Calu3 (cell line): ENCODE measurements at regions of chr5 and their contacts with region 1.

Region 1: DNA sequence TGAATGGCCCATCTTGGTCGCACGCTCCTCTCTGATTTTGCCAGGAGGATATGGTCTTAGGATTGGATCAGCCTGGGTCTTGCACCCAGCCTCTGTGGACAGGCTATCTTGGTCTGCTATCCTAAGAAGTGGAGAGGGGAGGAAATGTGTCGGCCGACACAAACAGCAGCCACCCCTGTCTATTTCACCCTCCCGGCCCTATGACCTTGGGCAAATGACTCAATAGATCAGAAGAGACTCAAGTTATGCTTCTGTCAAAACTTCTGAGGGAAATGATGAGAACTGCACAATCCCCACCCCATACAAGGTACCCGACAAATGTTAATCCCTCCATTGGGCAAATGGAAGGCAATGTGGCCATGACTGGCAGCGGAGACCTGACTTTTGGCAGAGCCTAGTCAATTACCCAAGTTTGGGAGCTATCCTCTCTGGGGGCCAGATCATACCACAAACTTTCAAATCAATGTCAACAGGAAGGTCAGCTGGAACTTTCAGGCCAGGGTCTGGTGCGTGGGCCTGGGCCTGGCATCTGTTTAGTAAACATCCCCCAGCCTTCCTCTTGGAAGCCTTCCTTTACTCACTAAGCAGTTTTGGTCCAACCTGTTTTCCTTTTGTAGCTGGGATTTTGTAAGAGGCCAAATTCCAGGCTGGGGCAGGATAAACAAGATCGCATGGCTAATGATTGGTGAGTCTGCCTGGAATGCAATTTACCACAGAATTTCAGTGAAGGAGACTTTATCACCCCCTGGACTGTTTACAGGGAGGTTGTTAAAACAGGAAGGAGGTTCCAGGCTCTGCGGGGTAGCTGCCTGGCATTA is 64.2 kb upstream of the CPEB4 start:
- DNase-seq: peak; percentile 86
- H3K4me3 Mint-ChIP-seq: peak overlapping the region; percentile 28
- H3K27ac Mint-ChIP-seq: peak overlapping the region; percentile 60
- H3K4me1 Mint-ChIP-seq: peaks cover 51% of the 10 kb centered on the region
- H3K27me3 Mint-ChIP-seq: no peaks in the 10 kb centered on the region
- CTCF ChIP-seq: no peak

Region 2: DNA sequence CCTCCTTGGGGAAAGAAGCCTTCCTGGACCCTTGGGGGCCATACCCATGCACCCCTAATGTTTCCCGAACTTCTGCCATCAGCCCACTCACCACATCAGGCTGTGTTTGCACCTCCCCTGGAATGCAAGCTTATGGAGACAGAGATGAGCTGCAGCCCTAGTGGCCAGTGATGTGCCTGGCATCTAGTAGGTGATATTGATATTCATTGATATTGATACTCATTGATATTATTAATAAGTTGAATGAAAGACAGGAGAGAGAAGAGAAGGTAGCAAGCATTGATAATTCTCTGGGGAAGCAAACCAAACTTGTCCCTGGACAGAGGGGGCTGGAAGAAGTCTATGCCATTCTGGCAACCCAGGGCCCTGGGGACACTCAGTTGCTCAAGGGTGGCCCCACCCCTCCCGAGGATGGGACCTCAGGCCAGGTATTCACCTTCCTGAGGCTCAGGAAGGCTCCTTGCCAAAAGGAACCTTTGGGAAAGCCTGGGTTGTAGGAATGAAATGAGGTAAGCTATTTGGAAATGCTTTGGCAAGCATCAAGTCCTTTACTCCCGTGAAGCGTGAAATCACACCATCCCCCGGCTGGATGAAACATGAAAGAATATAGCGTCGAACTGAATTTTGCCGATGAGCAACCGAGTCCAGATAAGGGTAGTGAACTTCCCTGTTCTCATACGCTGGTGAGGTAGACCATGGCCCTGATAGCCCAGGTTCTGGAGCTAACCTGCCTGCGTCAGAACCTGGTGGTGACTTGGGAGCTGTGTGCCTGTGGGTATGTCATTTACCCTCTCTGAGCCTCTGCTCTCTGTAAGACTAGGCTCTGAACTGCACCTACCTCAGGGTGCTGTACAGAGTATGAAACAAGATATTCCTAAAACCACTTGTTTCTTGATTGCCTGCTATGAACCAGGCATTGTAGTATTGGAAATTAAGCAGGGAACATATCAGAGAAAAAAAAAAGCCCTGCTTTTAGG is 102.4 kb before region 1 on chr5:
- CTCF ChIA-PET with region 1: no interaction called
- intact Hi-C with region 1: no loop called
- DNase-seq: no peak
- H3K4me3 Mint-ChIP-seq: no peak overlapping the region
- H3K27ac Mint-ChIP-seq: no peak overlapping the region
- H3K4me1 Mint-ChIP-seq: peaks cover 14% of the 10 kb centered on the region
- H3K27me3 Mint-ChIP-seq: no peaks in the 10 kb centered on the region
- CTCF ChIP-seq: no peak

Region 3: DNA sequence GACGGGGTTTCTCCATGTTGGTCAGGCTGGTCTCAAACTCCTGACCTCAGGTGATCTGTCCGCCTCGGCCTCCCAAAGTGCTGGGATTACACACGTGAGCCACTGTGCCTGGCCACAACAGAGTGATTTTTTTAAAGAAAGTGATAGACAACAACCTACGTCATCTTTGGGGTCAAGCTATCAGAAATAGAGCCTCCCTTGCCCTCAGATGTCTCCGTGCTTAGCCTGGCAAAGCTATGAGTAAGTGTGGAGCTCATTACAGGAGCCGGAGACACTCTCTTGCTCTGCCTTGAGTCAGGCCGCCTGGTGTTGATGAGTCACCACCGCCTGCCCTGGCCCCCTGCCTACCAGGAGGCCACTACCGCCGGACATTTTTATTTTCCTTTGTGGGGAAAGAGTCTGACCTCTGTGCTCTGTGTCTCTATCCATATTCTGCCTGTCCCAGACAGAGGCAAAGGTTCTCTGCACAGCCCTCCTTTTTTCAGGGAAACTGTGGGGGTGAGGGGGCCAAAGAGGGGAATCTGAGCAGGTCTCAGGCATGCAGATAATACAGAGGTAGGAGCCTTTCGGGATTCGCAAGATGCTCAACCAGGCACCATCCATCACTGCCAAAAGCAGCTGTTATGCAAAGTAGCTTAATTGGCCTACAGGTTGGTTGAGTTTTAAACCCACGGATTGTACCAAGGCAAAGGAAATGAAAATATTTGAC is 59.4 kb before region 1 on chr5:
- CTCF ChIA-PET with region 1: interaction called, 4 read pairs
- intact Hi-C with region 1: loop called (anchors 1 kb)
- DNase-seq: peak; percentile 92
- H3K4me3 Mint-ChIP-seq: peak overlapping the region; percentile 27
- H3K27ac Mint-ChIP-seq: peak overlapping the region; percentile 96
- H3K4me1 Mint-ChIP-seq: peaks cover 51% of the 10 kb centered on the region
- H3K27me3 Mint-ChIP-seq: no peaks in the 10 kb centered on the region
- CTCF ChIP-seq: no peak

Region 4: GRCh38 chr5:173780235-173781109 is 43.4 kb before region 1 on chr5:
- CTCF ChIA-PET with region 1: no interaction called
- intact Hi-C with region 1: no loop called
- DNase-seq: no peak
- H3K4me3 Mint-ChIP-seq: no peak overlapping the region
- H3K27ac Mint-ChIP-seq: no peak overlapping the region
- H3K4me1 Mint-ChIP-seq: peaks cover 52% of the 10 kb centered on the region
- H3K27me3 Mint-ChIP-seq: no peaks in the 10 kb centered on the region
- CTCF ChIP-seq: no peak

Region 5: DNA sequence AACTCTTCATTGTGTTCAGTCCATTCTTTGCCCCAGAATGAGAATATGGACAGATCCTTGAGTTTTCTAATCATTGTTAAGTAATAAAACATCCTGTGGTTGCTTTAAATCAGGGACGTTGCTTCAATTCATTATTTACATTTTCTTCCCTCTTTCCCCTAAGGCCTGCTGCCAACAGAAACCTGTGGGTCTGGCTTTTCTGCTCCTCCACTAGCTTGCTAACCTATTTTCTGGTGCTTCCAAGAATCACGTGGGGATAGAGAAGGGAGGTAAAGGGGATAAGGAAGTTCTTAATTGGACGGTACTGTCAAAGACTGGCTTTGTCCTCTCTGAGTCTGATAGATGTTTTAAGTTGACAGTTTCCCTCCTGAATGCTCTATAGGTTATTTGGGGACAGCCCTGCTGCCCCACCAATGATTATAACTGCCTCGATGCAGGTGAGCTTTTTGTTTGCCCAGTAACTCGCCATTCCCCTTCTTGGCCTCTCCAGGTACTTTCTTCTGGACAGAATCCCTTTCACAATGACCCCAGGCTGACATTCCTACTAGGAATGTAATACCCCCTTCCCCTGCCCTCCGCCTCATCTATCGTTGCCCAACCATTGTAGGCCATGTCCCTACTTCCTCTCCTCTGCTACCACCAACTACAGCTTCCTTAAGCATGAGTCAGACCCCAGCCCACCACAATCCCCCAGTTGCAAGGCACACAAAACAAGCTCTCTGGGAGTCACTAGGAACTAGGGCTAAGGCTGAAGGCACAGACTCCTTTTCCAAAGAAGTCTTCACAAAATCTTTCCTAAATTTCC is 44.4 kb after region 1 on chr5:
- CTCF ChIA-PET with region 1: interaction called, 5 read pairs
- intact Hi-C with region 1: loop called (anchors 1 kb)
- DNase-seq: peak; percentile 73
- H3K4me3 Mint-ChIP-seq: peak overlapping the region; percentile 5
- H3K27ac Mint-ChIP-seq: peak overlapping the region; percentile 42
- H3K4me1 Mint-ChIP-seq: peaks cover 24% of the 10 kb centered on the region
- H3K27me3 Mint-ChIP-seq: no peaks in the 10 kb centered on the region
- CTCF ChIP-seq: no peak

Region 6: GRCh38 chr5:173887610-173888472 is 63.9 kb after region 1 on chr5 and contains the start of gene CPEB4:
- CTCF ChIA-PET with region 1: interaction called, 9 read pairs
- intact Hi-C with region 1: loop called (anchors 5 kb)
- DNase-seq: peak; percentile 99
- H3K4me3 Mint-ChIP-seq: peak within 1 kb of the TSS; percentile 90
- H3K27ac Mint-ChIP-seq: peak within 1 kb of the TSS; percentile 100
- H3K4me1 Mint-ChIP-seq: peaks cover 74% of the 10 kb centered on the region
- H3K27me3 Mint-ChIP-seq: no peaks in the 10 kb centered on the region
- CTCF ChIP-seq: no peak
- total RNA-seq, gene CPEB4: 30.8 and 32.0 TPM in 2 replicates

Region 7: GRCh38 chr5:173972925-173973615 is 149.2 kb after region 1 on chr5:
- CTCF ChIA-PET with region 1: no interaction called
- intact Hi-C with region 1: loop called (anchors 5 kb)
- DNase-seq: peak; percentile 85
- H3K4me3 Mint-ChIP-seq: peak overlapping the region; percentile 73
- H3K27ac Mint-ChIP-seq: peak overlapping the region; percentile 60
- H3K4me1 Mint-ChIP-seq: peaks cover 22% of the 10 kb centered on the region
- H3K27me3 Mint-ChIP-seq: peaks cover 21% of the 10 kb centered on the region
- CTCF ChIP-seq: peak; percentile 82